Testis (tissue), 5 donors: ENCODE measurements at regions of chr3 and their contacts with region 1.

Region 1: DNA sequence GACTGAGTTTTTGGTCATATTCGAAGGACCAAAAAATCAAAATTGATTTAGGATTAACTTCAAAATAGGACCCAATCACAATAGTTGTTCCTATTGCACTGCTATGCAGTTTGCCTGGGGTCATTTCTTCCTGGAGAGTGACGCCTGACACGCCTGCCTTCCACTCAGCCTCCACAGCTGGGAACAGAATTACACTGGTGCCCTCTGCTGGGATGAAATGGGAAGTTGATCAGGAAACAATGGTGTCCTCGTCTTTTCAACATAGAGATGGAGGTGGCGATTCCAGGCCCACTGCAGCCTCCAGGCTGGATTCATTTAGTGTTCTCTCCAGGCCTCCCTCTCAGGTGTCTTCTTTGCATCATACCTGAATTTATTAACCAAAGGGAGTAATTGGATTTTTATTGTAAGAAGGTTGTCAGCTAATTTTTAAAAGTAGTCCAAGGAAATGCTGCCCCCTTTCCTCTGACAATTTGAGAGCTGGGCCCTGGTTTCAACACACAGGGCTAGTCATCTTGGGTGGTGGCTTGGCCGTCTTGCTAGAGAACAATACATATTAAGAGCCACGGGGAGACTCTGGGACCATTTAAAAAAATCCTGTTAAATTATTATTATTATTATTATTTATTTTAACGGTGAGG is 69.7 kb downstream of the GAP43 start:
- DNase-seq: peak; percentile 86
- H3K4me3 ChIP-seq: no peak overlapping the region
- H3K27ac ChIP-seq: no peak overlapping the region
- H3K4me1 ChIP-seq: no peaks in the 10 kb centered on the region
- H3K27me3 ChIP-seq: no peaks in the 10 kb centered on the region
- CTCF ChIP-seq: peak; percentile 68 to 70 (median 68)
- POLR2A ChIP-seq: no peak

Region 2: DNA sequence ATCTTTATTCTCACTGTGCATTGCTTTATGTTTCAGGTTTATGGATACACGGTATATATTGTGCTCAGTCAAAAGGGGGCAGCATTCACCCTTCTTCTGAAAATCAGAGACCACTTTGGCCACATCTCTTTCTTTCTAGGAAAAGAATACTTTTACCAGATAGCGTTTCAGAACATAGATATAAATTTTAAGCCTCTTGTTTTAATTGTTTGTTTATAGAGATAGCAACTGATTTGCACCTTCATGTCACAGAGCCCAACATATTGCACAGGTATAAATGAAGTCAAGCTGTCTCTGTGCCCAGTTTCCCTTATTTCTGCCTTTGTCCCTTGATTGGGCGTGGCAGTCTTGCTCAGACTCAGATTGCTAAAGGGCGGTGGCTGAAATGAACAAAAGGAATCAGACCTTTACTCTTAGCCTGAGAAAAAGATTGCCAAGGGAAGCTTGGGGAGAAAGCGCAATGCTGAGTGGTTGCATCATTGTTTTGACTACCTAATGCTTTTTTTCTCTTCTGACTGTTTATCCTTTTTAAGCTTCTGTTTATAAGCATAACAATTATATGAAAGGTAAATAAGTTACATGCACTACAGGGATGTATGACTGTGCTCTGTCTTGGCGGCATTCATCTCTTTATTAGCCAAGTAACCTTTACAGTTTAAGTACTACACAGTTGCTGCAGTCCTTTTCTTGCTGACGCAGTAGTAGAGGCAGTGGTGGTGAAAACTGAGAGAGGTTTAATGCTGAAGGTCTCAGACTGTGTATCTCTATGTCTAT is 475.1 kb before region 1 on chr3:
- intact Hi-C with region 1: loop called (anchors 5 kb)
- DNase-seq: peak; percentile 41
- H3K4me3 ChIP-seq: no peak overlapping the region
- H3K27ac ChIP-seq: no peak overlapping the region
- H3K4me1 ChIP-seq: no peaks in the 10 kb centered on the region
- H3K27me3 ChIP-seq: no peaks in the 10 kb centered on the region
- CTCF ChIP-seq: peak; percentile 65 to 74 (median 66)
- POLR2A ChIP-seq: no peak

Region 3: DNA sequence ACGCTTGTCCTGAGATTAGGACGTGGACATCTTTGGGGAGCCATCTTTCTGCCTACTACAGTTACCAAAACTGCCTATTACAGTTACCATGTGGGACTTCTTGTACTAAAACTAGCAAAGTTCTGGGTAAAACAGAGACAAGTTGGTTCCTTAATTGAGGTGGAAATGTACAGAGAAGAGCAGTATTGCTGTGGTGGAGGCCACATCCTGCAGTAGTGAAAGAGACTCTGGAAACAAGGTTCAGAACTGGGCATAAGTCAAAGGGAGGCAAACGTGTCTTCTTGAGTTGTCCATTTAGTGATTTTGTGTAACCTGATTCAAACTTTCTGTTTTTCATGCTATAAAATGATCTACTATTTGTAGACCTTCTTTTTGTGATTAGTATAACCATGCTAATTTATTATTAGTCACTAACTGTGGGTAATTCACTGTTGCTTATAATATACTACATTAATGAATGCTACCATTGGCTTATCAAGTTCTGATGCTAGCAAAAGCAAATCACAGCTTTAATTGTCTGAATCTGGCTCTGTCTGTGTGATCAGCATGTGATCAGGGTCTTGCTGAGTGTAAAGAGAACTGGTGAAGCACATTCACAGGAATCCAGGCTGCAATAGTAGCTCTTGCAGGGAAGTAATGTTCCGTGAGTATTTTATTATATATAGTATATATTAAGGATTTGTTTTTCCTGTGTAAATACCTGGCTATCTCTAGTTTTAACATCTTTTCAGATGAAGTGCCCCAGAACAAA is 277.6 kb before region 1 on chr3:
- intact Hi-C with region 1: no loop called
- DNase-seq: no peak
- H3K4me3 ChIP-seq: no peak overlapping the region
- H3K27ac ChIP-seq: no peak overlapping the region
- H3K4me1 ChIP-seq: no peaks in the 10 kb centered on the region
- H3K27me3 ChIP-seq: no peaks in the 10 kb centered on the region
- CTCF ChIP-seq: no peak
- POLR2A ChIP-seq: no peak

Region 4: GRCh38 chr3:115523458-115523857 is 169.5 kb before region 1 on chr3:
- intact Hi-C with region 1: no loop called
- DNase-seq: no peak
- H3K4me3 ChIP-seq: no peak overlapping the region
- H3K27ac ChIP-seq: no peak overlapping the region
- H3K4me1 ChIP-seq: peaks cover 3% of the 10 kb centered on the region
- H3K27me3 ChIP-seq: no peaks in the 10 kb centered on the region
- CTCF ChIP-seq: no peak
- POLR2A ChIP-seq: no peak

Region 5: GRCh38 chr3:115913069-115913674 is 220.2 kb after region 1 on chr3:
- intact Hi-C with region 1: no loop called
- DNase-seq: no peak
- H3K4me3 ChIP-seq: no peak overlapping the region
- H3K27ac ChIP-seq: no peak overlapping the region
- H3K4me1 ChIP-seq: no peaks in the 10 kb centered on the region
- H3K27me3 ChIP-seq: no peaks in the 10 kb centered on the region
- CTCF ChIP-seq: peak in 1 of 3 experiments; percentile 29
- POLR2A ChIP-seq: no peak